Mammary epithelial cell (primary cell): ENCODE measurements at regions of chr10 and their contacts with region 1.

Region 1: GRCh38 chr10:33330543-33331378 is 3.7 kb downstream of the NRP1 start:
- DNase-seq: peak; percentile 73
- H3K4me3 ChIP-seq: peak overlapping the region; percentile 91 to 95 (median 91)
- H3K27ac ChIP-seq: peak overlapping the region; percentile 55
- H3K4me1 ChIP-seq: peaks cover 40% of the 10 kb centered on the region
- H3K27me3 ChIP-seq: no peaks in the 10 kb centered on the region
- CTCF ChIP-seq: peak; percentile 88 to 91

Region 2: DNA sequence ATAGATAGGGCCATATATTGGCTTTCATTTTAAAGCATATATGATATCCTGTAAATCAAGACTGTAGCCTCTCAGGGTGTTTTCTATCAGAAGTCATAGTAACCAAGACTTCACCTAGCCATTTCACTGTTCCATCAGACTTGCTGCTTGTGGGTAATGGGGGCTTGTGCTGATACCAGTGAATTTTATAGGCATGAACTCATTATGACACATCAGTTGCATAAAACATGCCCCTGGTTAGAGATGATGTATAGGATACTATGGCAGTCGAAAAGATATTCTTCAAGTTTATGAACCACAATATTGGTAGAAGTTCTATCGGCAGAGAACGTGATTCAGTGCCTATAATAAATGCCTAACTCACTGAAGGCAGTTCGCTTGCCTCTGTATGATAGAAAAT is 579.2 kb before region 1 on chr10:
- CTCF ChIA-PET with region 1: no interaction called
- dilution Hi-C with region 1: no loop called
- in situ Hi-C with region 1: no loop called
- intact Hi-C with region 1: no loop called
- DNase-seq: no peak
- H3K4me3 ChIP-seq: no peak overlapping the region
- H3K27ac ChIP-seq: no peak overlapping the region
- H3K4me1 ChIP-seq: no peaks in the 10 kb centered on the region
- H3K27me3 ChIP-seq: no peaks in the 10 kb centered on the region
- CTCF ChIP-seq: no peak

Region 3: GRCh38 chr10:33365871-33366411 is 35.2 kb after region 1 on chr10:
- CTCF ChIA-PET with region 1: no interaction called
- dilution Hi-C with region 1: no loop called
- in situ Hi-C with region 1: no loop called
- intact Hi-C with region 1: loop called (anchors 2 kb)
- DNase-seq: peak; percentile 95
- H3K4me3 ChIP-seq: no peak overlapping the region
- H3K27ac ChIP-seq: peak overlapping the region; percentile 87
- H3K4me1 ChIP-seq: peaks cover 33% of the 10 kb centered on the region
- H3K27me3 ChIP-seq: no peaks in the 10 kb centered on the region
- CTCF ChIP-seq: no peak

Region 4: DNA sequence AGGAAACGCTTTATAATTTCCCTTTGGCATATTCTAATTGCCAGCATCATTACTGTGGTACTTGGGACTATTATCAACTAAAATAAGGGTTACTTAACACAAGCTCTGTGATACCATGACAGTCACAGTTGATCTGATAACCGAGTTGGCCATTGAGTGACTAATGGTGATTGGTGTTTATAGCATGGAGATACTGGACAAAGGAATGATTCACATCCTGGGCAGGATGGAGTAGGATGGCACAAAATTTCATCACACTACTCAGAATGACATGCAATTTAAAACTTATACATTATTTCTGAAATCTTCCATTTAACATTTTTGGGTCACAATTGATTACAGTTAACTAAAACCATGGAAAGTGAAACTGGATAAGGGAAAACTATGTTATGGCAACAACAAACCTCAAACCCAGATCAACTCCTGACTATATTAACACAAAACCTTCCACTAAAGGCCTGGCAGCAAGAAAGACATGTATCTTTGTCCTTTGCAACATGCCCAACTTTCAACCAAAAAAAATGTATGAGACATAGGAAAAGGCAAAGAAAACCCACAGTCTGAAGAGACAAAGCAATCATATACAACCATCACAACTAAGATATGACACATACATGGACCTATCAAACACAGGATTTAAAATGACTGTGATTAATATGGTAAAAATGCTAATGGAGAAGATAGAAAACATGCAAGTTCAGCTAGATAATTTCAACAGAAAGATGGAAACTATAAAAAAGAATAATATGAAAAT is 212.2 kb after region 1 on chr10:
- CTCF ChIA-PET with region 1: no interaction called
- dilution Hi-C with region 1: no loop called
- in situ Hi-C with region 1: no loop called
- intact Hi-C with region 1: loop called (anchors 2 kb)
- DNase-seq: peak; percentile 84
- H3K4me3 ChIP-seq: no peak overlapping the region
- H3K27ac ChIP-seq: peak overlapping the region; percentile 97
- H3K4me1 ChIP-seq: peaks cover 22% of the 10 kb centered on the region
- H3K27me3 ChIP-seq: no peaks in the 10 kb centered on the region
- CTCF ChIP-seq: no peak

Region 5: GRCh38 chr10:33674986-33675599 is 344.3 kb after region 1 on chr10:
- CTCF ChIA-PET with region 1: no interaction called
- dilution Hi-C with region 1: no loop called
- in situ Hi-C with region 1: no loop called
- intact Hi-C with region 1: loop called (anchors 10 kb)
- DNase-seq: no peak
- H3K4me3 ChIP-seq: peak overlapping the region in 1 of 3 experiments; percentile 25
- H3K27ac ChIP-seq: no peak overlapping the region
- H3K4me1 ChIP-seq: peaks cover 3% of the 10 kb centered on the region
- H3K27me3 ChIP-seq: no peaks in the 10 kb centered on the region
- CTCF ChIP-seq: no peak

Region 6: GRCh38 chr10:34078745-34079470 is 748.1 kb after region 1 on chr10:
- CTCF ChIA-PET with region 1: no interaction called
- dilution Hi-C with region 1: no loop called
- in situ Hi-C with region 1: no loop called
- intact Hi-C with region 1: loop called (anchors 10 kb)
- DNase-seq: peak; percentile 27
- H3K4me3 ChIP-seq: no peak overlapping the region
- H3K27ac ChIP-seq: no peak overlapping the region
- H3K4me1 ChIP-seq: peaks cover 8% of the 10 kb centered on the region
- H3K27me3 ChIP-seq: no peaks in the 10 kb centered on the region
- CTCF ChIP-seq: no peak

Region 7: GRCh38 chr10:34145715-34146114 is 815.0 kb after region 1 on chr10:
- CTCF ChIA-PET with region 1: no interaction called
- dilution Hi-C with region 1: no loop called
- in situ Hi-C with region 1: no loop called
- intact Hi-C with region 1: no loop called
- DNase-seq: no peak
- H3K4me3 ChIP-seq: no peak overlapping the region
- H3K27ac ChIP-seq: no peak overlapping the region
- H3K4me1 ChIP-seq: no peaks in the 10 kb centered on the region
- H3K27me3 ChIP-seq: no peaks in the 10 kb centered on the region
- CTCF ChIP-seq: no peak

Region 8: DNA sequence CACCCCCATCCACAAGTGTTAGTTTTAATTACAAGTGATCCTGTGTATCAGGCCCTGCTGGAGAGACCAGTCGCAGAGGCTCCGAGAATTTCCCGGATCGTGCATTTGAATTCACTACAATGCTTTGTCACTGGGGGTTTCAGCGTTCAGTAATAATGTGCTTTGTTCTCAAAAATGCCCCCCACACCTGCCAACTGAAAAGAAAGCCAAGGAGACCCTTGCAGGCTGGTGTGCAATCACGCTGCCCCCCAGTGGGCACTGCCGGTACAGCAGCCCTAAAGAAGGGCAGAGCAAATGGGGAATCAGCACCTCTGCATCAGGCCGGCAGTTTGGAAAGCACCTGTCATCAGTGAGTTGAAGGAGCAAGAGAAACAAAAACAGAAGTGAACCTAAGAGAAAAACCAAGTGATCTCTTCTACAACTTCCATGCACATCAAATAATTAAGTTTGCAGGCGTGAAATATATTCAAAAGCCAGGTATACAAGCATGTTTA is 1306.7 kb after region 1 on chr10:
- CTCF ChIA-PET with region 1: no interaction called
- dilution Hi-C with region 1: no loop called
- in situ Hi-C with region 1: loop called in 1 of 2 experiments (anchors 10 kb)
- intact Hi-C with region 1: no loop called
- DNase-seq: peak; percentile 18
- H3K4me3 ChIP-seq: no peak overlapping the region
- H3K27ac ChIP-seq: no peak overlapping the region
- H3K4me1 ChIP-seq: peaks cover 5% of the 10 kb centered on the region
- H3K27me3 ChIP-seq: no peaks in the 10 kb centered on the region
- CTCF ChIP-seq: peak; percentile 97 to 98